ENCODE measurements at regions of chr12 and their contacts with region 1.

Region 1: DNA sequence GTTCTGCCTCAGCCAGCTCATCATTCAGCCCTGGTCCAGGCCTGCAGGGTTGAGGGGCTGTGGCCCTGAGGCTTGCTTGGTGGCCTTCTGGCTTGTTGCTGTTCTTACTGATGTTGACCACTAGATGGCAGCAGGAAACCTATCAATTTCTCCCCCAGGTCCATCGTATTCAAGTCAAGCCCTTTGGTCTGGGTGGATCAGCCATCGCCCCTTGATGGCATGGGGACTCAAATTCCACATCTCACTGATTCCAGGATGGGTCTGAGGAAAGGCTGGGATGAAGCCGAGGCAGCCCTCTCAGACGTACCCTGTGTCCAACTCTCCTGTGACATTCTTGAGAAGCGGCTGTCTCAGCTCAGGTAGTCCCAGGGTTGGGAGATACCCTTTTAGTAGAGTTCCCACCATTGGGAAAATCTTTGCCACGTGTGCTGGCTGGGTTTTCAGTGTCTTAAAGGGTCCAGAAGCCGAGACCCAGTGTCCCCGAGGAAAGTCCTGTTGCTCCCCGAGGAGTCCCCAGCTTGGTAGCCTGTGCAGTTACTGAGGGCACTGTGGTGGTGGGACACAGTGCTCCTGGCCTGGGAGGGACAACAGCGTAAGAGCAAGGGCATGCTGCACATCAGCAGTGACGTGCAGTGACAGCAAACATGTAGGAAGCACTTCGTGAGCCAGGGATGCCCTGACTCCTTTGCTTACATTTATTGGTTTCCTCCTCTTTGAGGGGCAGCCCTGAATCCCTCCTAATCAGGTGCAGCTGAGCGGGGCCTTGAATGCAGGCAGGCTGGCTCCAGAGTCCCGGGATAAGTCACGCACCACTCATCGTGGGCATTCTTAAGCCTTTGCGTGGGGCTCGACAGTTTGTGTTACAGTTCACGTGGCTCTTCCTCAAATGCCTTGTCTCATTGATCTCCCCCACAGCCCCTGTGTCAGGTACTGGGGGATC is 58.6 kb downstream of the TSPAN9 start:
- DNase-seq: peak in 3 of 10 donors; percentile 38 to 77 (median 39)
- H3K4me3 ChIP-seq: no peak overlapping the region
- H3K27ac ChIP-seq: peak overlapping the region in 1 of 59 donors; percentile 48
- H3K27me3 ChIP-seq: peaks cover 0 to 34% (median 0%) of the 10 kb centered on the region in 45 donors
- CTCF ChIP-seq: peak; percentile 56 to 93 (median 84)

Region 2: DNA sequence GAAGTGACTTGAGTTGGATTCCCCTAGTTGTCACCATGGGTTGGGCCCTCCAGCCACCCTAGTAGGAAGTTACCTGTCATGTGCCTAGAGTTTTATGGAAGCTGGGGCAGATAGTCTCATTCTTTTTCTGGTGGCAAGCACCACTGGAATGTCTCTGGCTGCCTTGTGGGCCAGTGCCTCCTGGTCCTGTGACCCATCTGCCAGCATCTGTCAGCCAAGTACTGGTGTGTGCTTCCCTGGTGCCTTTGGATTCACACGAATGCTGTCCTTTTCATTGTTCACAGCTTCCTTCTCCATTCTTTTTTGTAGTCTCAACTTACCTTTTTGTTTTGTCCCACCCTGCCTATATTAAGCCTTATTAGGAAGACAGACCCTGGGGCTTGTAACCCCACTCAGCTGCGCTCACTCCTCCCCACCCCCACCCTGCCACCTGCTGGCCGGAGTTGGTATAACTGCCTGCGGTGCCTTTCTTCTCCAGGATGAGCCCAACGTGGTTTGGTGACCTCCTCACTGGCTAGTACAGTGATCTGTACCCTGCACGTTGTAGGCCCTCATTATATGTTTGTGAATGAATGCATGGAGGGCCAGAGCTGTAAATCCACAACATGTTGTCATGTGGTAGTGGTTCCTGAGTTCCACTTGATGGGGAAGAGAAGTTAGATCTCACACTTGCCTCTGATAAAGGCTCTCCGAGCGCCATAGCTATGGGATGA is 67.1 kb after region 1 on chr12:
- intact Hi-C with region 1: loop called (anchors 5 kb)
- DNase-seq: peak in 7 of 10 donors; percentile 35 to 83 (median 43)
- H3K4me3 ChIP-seq: peak overlapping the region in 5 of 59 donors; percentile 13 to 65 (median 17)
- H3K27ac ChIP-seq: peak overlapping the region in 1 of 59 donors; percentile 89
- H3K27me3 ChIP-seq: peaks cover 0 to 60% (median 11%) of the 10 kb centered on the region in 45 donors
- CTCF ChIP-seq: peak; percentile 59 to 90 (median 81)